ENCODE measurements at regions of chr5 and their contacts with region 1.

Region 1: DNA sequence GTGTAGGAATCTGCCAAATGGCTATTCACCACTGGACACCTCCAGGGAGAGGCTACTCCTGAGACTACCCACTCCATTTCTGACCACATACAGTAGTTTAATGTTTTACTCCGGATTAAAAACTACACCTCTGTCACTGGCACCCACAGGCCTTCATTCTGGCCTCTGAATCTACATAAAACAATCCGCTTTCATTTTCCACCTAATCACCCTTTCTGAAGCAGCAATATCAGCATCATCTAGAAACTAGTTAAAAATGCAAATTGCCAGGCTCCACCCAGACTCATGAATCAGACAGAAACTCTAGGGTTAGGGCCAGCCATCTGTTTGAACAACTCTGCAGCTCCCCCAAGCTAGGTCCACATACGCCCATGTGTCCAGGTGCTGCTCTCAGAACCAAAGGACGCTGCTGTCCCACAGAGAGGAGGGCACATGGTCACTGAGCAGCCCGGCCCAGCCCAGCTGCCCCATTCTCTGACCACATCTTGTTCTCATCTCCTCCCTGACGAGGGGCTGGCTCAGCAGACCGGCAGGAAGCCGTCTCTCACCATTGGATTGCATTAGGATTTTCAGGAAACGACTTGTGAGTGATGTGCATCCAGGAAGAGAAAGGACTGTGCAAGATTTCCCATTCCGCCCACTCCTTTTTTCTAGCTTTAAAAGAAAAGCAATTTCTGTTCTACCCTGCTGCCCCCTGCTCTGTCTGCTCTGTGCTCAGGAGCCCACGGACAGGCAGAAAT is 34.7 kb downstream of the ADAM19 start:
- DNase-seq: peak; percentile 59
- H3K4me3 Mint-ChIP-seq: peak overlapping the region; percentile 56
- H3K27ac Mint-ChIP-seq: peak overlapping the region; percentile 85
- H3K4me1 Mint-ChIP-seq: peaks cover 82% of the 10 kb centered on the region
- H3K27me3 Mint-ChIP-seq: no peaks in the 10 kb centered on the region

Region 2: GRCh38 chr5:157180374-157181264 is 360.3 kb before region 1 on chr5 and contains the start of gene ITK:
- intact Hi-C with region 1: loop called (anchors 5 kb)
- DNase-seq: peak; percentile 53
- H3K4me3 Mint-ChIP-seq: peak within 1 kb of the TSS; percentile 99
- H3K27ac Mint-ChIP-seq: peak within 1 kb of the TSS; percentile 98
- H3K4me1 Mint-ChIP-seq: peaks cover 44% of the 10 kb centered on the region
- H3K27me3 Mint-ChIP-seq: no peaks in the 10 kb centered on the region
- total RNA-seq, gene ITK: 313 and 319 TPM in 2 replicates

Region 3: GRCh38 chr5:157354800-157355199 is 186.1 kb before region 1 on chr5:
- intact Hi-C with region 1: loop called (anchors 2 kb)
- DNase-seq: no peak
- H3K4me3 Mint-ChIP-seq: no peak overlapping the region
- H3K27ac Mint-ChIP-seq: no peak overlapping the region
- H3K4me1 Mint-ChIP-seq: peaks cover 35% of the 10 kb centered on the region
- H3K27me3 Mint-ChIP-seq: no peaks in the 10 kb centered on the region

Region 4: DNA sequence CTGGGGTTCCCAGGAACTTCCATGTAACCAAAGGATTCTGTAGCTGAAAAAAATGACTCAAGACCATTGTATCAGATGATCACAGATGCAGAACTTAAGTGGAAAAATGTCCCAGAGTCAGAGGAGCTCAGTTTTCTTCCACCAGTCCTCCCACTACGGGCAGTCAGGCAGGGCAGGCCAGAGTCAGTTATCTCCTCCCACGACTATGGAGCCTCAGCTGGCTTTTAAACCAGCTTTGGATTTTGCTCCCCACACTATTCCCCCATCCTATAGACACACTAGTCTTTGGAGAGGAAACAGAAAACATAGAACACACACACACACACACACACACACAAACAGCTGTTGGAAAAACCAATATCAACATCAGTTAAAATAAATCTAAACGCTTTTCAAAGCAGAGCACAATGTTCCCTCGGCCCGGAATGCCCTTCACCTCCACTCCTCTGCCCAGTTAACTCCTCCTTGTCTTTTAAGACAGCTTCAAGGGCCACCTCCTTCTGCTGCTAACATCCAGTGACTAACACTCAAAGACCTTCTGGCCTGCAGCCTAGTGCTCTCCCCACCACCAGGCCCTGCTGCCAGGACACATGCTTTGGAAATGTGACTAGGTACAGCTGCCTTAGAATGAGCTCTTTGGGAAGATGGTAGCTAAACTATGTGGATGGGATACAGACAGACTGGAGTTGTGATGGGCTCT is 24.1 kb before region 1 on chr5:
- intact Hi-C with region 1: loop called (anchors 1 kb)
- DNase-seq: no peak
- H3K4me3 Mint-ChIP-seq: no peak overlapping the region
- H3K27ac Mint-ChIP-seq: peak overlapping the region; percentile 51
- H3K4me1 Mint-ChIP-seq: peaks cover 68% of the 10 kb centered on the region
- H3K27me3 Mint-ChIP-seq: no peaks in the 10 kb centered on the region

Region 5: GRCh38 chr5:157582731-157583620 is 42.1 kb after region 1 on chr5:
- intact Hi-C with region 1: loop called (anchors 1 kb)
- DNase-seq: no peak
- H3K4me3 Mint-ChIP-seq: peak overlapping the region; percentile 1
- H3K27ac Mint-ChIP-seq: peak overlapping the region; percentile 65
- H3K4me1 Mint-ChIP-seq: peaks cover 52% of the 10 kb centered on the region
- H3K27me3 Mint-ChIP-seq: no peaks in the 10 kb centered on the region

Region 6: DNA sequence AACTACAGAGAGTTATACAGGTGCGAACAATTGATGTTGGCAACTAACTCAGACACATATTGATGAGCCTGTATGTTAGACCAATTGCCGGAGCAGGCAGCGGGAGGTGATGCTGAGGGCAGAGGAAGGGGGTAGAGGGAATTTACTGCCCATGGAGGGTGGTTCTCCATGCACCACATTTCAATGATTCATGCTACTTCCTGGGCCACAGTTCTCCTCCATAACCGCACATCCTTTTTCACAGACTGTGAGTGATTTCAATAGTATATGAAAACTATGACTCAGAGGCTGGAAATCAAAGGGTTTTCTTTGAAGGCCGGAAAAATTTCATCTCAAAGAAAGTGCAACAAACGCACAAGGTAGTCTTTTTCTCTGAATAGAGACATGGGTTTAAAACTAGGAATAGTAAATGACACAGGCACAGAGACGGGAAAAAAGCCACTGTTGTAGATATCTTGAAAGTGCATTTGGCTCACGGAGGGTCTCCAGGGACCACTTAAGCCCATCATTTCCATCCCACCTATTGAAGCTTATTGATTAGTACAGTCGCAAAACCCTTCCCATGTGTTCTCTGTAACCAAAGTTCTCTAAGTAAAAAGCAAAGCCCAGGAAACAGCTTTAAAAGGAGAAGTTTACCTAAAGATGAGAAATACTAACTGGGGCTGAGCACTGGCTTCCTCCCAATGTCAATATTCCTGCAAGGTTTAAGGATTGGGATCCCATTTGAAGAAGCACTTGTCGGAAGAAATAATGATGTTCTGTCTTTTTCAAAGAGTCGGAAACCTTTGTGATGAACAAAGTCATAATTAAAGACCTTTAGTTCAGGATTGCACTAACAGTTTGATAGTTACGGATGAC is 62.7 kb after region 1 on chr5:
- intact Hi-C with region 1: loop called (anchors 1 kb)
- DNase-seq: peak; percentile 75
- H3K4me3 Mint-ChIP-seq: peak overlapping the region; percentile 52
- H3K27ac Mint-ChIP-seq: peak overlapping the region; percentile 80
- H3K4me1 Mint-ChIP-seq: peaks cover 79% of the 10 kb centered on the region
- H3K27me3 Mint-ChIP-seq: no peaks in the 10 kb centered on the region

Region 7: DNA sequence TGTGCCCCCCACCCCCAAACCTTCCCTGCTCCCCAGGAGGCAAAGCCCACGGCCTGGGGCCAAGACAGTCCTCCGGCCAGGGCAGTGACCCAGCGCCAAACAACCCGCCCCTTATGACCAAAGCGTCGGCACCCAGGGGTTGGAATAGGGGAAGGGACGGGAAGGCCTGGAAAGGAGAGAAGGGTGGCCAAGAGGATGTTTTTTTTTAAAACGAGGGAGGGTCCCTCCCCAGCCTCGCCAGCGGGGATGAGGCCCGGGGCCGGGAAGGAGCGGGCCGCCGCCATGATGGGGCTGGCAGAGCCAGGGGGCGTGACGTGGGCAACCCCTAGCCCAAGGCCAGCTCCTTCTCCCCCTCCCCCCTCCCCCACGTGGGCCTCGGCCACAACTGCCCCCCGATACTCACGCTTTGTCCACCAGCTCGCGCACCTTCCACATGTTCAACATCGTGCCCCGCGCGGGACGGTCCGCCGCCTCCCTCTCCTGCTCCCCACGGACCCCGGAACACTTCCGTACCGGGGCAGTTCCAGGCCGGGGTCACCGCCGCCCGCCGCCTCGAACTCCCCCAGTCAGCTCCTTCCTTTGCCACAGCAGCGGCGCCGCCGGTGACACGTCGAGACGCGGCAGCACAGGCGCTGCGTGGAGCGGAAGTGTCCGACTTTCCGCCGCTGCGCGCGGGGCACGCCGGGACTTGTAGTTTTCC is 317.8 kb after region 1 on chr5 and contains the start of gene CLINT1:
- intact Hi-C with region 1: loop called (anchors 2 kb)
- DNase-seq: peak; percentile 83
- H3K4me3 Mint-ChIP-seq: peak within 1 kb of the TSS; percentile 86
- H3K27ac Mint-ChIP-seq: peak within 1 kb of the TSS; percentile 98
- H3K4me1 Mint-ChIP-seq: peaks cover 61% of the 10 kb centered on the region
- H3K27me3 Mint-ChIP-seq: no peaks in the 10 kb centered on the region
- total RNA-seq, gene CLINT1: 95.2 and 100 TPM in 2 replicates

Region 8: DNA sequence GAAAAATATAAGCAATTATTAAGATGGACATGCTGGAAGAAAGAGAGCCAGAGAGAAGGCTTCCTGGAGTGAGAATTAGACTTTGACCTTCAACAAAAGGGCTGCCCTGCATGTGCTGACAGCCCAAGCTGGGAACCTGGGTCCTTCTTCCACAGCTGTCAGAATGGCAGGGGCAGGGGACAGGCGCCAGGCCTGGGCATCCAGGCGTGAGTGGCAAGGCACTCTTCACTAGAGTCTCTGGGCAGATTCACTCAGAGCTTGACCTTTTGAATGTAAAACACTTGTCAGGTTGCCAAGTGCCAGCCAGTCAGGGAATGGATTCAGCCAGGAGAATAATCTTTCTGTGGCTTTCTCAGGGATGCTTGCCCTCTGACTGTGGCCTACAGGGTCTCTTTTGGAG is 437.2 kb after region 1 on chr5:
- intact Hi-C with region 1: no loop called
- DNase-seq: no peak
- H3K4me3 Mint-ChIP-seq: no peak overlapping the region
- H3K27ac Mint-ChIP-seq: no peak overlapping the region
- H3K4me1 Mint-ChIP-seq: no peaks in the 10 kb centered on the region
- H3K27me3 Mint-ChIP-seq: peaks cover 31% of the 10 kb centered on the region

Measured in activated T-helper 2 cell treated with anti-CD3 and anti-CD28 coated beads, Interferon-gamma antibody, Interleukin-2, Interleukin-4, amounts not matched to agents 10 μg/mL and 5 μg/mL and 100 μg/mL, durations not matched to agents 14 hours and 24 hours and 36 hours (primary cell).